H1 (cell line): ENCODE measurements at regions of chr18 and their contacts with region 1.

Region 1: GRCh38 chr18:25896178-25896780 is 194.1 kb downstream of the SS18 start:
- DNase-seq: no peak
- H3K4me3 ChIP-seq: no peak overlapping the region
- H3K27ac ChIP-seq: no peak overlapping the region
- H3K4me1 ChIP-seq: no peaks in the 10 kb centered on the region
- H3K27me3 ChIP-seq: no peaks in the 10 kb centered on the region
- CTCF ChIP-seq: peak; percentile 64 to 73 (median 67)
- EP300 ChIP-seq: no peak
- POLR2A ChIP-seq: no peak
- RAD21 ChIP-seq: peak; percentile 84 to 86

Region 2: DNA sequence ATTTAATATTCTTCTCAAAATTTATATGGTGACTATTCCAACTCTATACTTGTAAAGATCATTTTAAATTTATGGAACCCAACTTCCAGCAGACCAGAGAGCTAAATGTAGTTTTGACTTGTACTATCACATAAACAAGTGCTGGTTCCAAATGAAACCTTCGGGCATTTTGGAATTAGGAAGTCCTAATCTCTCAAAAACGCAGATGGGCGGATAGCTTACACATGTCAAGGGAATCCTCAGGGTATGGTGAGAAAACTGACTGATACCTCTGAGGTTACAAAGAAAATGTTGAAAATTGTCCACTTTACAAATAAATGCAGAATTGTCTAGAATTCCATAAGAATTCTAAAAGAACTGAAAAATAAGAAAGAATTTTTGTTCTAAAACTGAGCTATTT is 29.9 kb before region 1 on chr18:
- CTCF ChIA-PET with region 1: interaction called, 10 read pairs
- POLR2A ChIA-PET with region 1: no interaction called
- DNase-seq: no peak
- H3K4me3 ChIP-seq: no peak overlapping the region
- H3K27ac ChIP-seq: no peak overlapping the region
- H3K4me1 ChIP-seq: no peaks in the 10 kb centered on the region
- H3K27me3 ChIP-seq: no peaks in the 10 kb centered on the region
- CTCF ChIP-seq: no peak
- EP300 ChIP-seq: no peak
- POLR2A ChIP-seq: no peak
- RAD21 ChIP-seq: no peak

Region 3: GRCh38 chr18:25875551-25876240 is 20.6 kb before region 1 on chr18:
- CTCF ChIA-PET with region 1: interaction called, 48 read pairs
- POLR2A ChIA-PET with region 1: no interaction called
- DNase-seq: no peak
- H3K4me3 ChIP-seq: no peak overlapping the region
- H3K27ac ChIP-seq: no peak overlapping the region
- H3K4me1 ChIP-seq: no peaks in the 10 kb centered on the region
- H3K27me3 ChIP-seq: no peaks in the 10 kb centered on the region
- CTCF ChIP-seq: no peak
- EP300 ChIP-seq: no peak
- POLR2A ChIP-seq: no peak
- RAD21 ChIP-seq: no peak

Region 4: GRCh38 chr18:25883091-25883490 is 13.2 kb before region 1 on chr18:
- CTCF ChIA-PET with region 1: interaction called, 48 read pairs
- POLR2A ChIA-PET with region 1: no interaction called
- DNase-seq: no peak
- H3K4me3 ChIP-seq: no peak overlapping the region
- H3K27ac ChIP-seq: no peak overlapping the region
- H3K4me1 ChIP-seq: peaks cover 0 to 4% (median 2%) of the 10 kb centered on the region in 4 experiments; a peak in 2 of 7 replicates
- H3K27me3 ChIP-seq: no peaks in the 10 kb centered on the region
- CTCF ChIP-seq: no peak
- EP300 ChIP-seq: no peak
- POLR2A ChIP-seq: no peak
- RAD21 ChIP-seq: no peak